ENCODE measurements at regions of chr13 and their contacts with region 1.

Region 1: GRCh38 chr13:44917589-44918325 is 71.5 kb downstream of the NUFIP1 start:
- DNase-seq: peak; percentile 99
- H3K4me3 Mint-ChIP-seq: no peak overlapping the region
- H3K27ac Mint-ChIP-seq: no peak overlapping the region
- H3K4me1 Mint-ChIP-seq: no peaks in the 10 kb centered on the region
- H3K27me3 Mint-ChIP-seq: no peaks in the 10 kb centered on the region

Region 2: DNA sequence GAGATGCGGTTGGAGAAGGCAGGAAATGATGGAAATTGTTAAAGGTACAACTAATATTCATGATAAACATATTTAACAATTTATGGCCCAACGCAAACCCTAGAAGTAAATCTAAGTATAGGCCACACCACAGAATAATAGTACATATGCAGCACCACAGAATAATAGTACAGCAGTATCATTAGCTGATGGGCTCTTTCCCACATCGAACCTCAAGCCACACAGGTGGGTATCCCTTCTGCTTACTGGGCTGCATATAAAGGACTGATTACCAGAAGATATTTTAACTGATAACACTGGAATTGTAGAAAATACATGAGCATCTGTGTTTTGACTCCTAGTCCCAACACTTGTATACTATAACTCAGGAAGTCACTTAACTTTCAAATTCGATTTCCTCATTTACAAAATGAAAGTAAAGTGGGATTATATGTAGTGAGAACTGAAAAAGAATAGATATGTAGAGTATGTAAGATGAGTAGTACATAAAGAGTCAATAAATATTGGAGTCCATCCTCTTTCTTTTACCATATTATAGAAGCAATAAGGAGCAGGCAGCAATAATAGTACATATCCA is 433.1 kb before region 1 on chr13:
- intact Hi-C with region 1: loop called (anchors 1 kb)
- DNase-seq: peak; percentile 60
- H3K4me3 Mint-ChIP-seq: peak overlapping the region; percentile 64
- H3K27ac Mint-ChIP-seq: no peak overlapping the region
- H3K4me1 Mint-ChIP-seq: peaks cover 8% of the 10 kb centered on the region
- H3K27me3 Mint-ChIP-seq: peaks cover 3% of the 10 kb centered on the region

Region 3: DNA sequence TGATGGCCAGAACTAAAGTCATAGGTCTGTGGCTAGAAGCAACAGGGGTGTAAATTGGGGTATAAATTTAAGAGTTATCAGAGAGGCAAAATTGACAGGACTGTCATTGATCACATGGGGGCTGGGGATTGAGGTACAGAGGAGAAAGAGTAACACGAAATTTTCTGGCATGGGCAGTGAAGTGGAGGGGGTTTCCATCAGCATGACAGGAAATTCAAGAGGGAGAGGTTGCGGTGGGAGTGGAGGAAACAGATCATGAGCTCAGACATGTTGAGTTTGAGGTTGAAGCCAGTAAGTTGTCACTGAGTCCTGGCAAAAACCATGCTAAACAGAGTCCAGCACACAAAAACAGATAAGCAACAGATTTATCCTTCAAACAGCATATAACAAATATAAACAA is 149.5 kb before region 1 on chr13:
- intact Hi-C with region 1: loop called (anchors 5 kb)
- DNase-seq: peak; percentile 88
- H3K4me3 Mint-ChIP-seq: peak overlapping the region; percentile 54
- H3K27ac Mint-ChIP-seq: peak overlapping the region; percentile 79
- H3K4me1 Mint-ChIP-seq: peaks cover 35% of the 10 kb centered on the region
- H3K27me3 Mint-ChIP-seq: no peaks in the 10 kb centered on the region

Region 4: GRCh38 chr13:44801990-44802389 is 115.8 kb before region 1 on chr13:
- intact Hi-C with region 1: no loop called
- DNase-seq: no peak
- H3K4me3 Mint-ChIP-seq: no peak overlapping the region
- H3K27ac Mint-ChIP-seq: no peak overlapping the region
- H3K4me1 Mint-ChIP-seq: peaks cover 3% of the 10 kb centered on the region
- H3K27me3 Mint-ChIP-seq: peaks cover 2% of the 10 kb centered on the region

Region 5: GRCh38 chr13:44969551-44970484 is 52.1 kb after region 1 on chr13:
- intact Hi-C with region 1: loop called (anchors 1 kb)
- DNase-seq: no peak
- H3K4me3 Mint-ChIP-seq: no peak overlapping the region
- H3K27ac Mint-ChIP-seq: no peak overlapping the region
- H3K4me1 Mint-ChIP-seq: peaks cover 2% of the 10 kb centered on the region
- H3K27me3 Mint-ChIP-seq: no peaks in the 10 kb centered on the region

Region 6: DNA sequence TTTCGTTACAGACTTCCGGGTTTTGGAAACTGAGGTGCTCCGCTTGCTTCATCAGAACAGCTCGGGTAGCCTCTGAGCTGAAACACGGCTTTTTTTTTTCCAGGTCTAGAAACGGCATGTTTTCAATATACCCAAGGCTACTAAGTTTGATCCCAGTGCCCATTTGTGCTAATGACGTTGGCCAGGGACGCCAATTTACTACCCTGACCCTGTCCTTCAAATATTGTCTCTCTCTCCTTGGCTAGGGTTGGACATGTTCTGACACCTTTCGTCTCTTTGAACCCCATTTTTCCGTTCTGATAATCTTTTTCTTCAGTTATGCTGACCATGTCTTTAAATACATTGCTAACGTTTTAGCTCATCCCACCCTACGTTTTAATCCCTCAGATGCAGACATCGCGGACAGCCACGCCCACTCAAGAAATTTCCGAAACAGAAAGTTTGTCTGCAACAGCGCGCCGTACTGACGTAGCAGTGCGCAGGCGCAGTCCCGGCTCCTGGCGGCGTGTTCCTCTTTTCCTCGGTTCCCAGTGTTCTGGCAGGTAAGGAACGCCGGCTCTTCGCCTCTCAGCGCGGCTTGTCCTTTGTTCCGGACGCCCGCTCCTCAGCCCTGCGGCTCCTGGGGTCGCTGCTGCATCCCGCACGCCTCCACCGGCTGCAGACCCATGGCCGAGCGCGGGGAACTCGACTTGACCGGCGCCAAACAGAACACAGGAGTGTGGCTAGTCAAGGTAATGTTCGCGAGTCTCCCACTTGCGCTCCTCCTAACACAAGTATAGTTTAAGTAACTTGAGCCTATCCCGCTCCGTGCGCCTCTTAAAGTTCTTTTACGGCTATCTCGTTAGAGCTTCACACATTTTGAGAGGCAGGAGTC is 202.5 kb after region 1 on chr13 and contains the start of gene GTF2F2:
- intact Hi-C with region 1: loop called (anchors 1 kb)
- DNase-seq: peak; percentile 97
- H3K4me3 Mint-ChIP-seq: no peak within 1 kb of the TSS
- H3K27ac Mint-ChIP-seq: no peak within 1 kb of the TSS
- H3K4me1 Mint-ChIP-seq: peaks cover 7% of the 10 kb centered on the region
- H3K27me3 Mint-ChIP-seq: no peaks in the 10 kb centered on the region
- total RNA-seq, gene GTF2F2: 29.2 and 30.0 TPM in 2 replicates

Measured in activated CD4-positive, alpha-beta T cell treated with anti-CD3 and anti-CD28 coated beads, Interleukin-2, amount 10 ng/mL, durations not matched to agents 24 days and 14 days (primary cell).